ENCODE measurements at regions of chr4 and their contacts with region 1.

Region 1: GRCh38 chr4:76504613-76505465 is 69.8 kb downstream of the SHROOM3 start:
- DNase-seq: no peak
- H3K4me3 ChIP-seq: no peak overlapping the region
- H3K27ac ChIP-seq: no peak overlapping the region
- H3K4me1 ChIP-seq: no peaks in the 10 kb centered on the region
- H3K27me3 ChIP-seq: peaks cover 15% of the 10 kb centered on the region
- CTCF ChIP-seq: peak; percentile 76

Region 2: GRCh38 chr4:76179398-76180318 is 325.2 kb before region 1 on chr4:
- intact Hi-C with region 1: loop called (anchors 10 kb)
- DNase-seq: peak; percentile 82
- H3K4me3 ChIP-seq: no peak overlapping the region
- H3K27ac ChIP-seq: no peak overlapping the region
- H3K4me1 ChIP-seq: peaks cover 50% of the 10 kb centered on the region
- H3K27me3 ChIP-seq: no peaks in the 10 kb centered on the region
- CTCF ChIP-seq: peak; percentile 92

Region 3: DNA sequence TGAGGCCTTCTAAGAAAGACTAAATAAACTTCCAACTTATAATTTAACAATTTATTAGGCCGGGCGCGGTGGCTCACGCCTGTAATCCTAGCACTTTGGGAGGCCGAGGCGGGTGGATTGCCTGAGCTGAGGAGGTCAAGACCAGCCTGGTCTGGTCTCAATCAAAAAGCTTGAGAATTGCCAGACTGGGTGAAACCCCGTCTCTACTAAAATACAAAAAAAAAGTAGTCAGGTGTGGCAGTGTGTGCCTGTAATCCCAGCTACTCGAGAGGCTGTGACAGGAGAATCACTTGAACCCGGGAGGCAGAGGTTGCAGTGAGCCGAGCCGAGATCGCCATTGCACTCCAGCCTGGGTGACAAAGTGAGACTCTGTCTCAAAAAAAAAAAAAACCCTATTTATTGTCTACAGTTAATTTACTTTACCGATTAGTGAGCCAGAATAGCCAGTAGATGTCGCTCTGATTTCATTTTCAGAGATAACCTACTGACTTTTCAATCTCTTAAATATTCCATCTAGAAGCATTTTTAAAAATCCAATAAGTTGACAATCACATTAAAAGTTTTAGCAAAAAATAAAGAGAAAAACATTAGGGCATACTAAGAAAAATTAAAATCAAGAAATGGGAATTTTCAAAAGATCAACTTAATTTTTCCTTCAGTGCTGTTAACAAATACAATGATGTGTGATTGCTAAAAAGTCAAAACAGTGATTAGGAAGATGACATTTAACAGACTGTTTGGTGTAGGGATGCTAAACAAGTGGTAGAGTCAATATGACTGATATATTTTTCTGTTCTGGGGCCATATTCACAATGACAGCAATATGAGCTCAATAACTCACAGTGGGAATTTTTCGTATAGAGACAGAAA is 74.1 kb before region 1 on chr4:
- intact Hi-C with region 1: loop called (anchors 5 kb)
- DNase-seq: no peak
- H3K4me3 ChIP-seq: no peak overlapping the region
- H3K27ac ChIP-seq: no peak overlapping the region
- H3K4me1 ChIP-seq: peaks cover 12% of the 10 kb centered on the region
- H3K27me3 ChIP-seq: peaks cover 17% of the 10 kb centered on the region
- CTCF ChIP-seq: peak; percentile 72

Region 4: DNA sequence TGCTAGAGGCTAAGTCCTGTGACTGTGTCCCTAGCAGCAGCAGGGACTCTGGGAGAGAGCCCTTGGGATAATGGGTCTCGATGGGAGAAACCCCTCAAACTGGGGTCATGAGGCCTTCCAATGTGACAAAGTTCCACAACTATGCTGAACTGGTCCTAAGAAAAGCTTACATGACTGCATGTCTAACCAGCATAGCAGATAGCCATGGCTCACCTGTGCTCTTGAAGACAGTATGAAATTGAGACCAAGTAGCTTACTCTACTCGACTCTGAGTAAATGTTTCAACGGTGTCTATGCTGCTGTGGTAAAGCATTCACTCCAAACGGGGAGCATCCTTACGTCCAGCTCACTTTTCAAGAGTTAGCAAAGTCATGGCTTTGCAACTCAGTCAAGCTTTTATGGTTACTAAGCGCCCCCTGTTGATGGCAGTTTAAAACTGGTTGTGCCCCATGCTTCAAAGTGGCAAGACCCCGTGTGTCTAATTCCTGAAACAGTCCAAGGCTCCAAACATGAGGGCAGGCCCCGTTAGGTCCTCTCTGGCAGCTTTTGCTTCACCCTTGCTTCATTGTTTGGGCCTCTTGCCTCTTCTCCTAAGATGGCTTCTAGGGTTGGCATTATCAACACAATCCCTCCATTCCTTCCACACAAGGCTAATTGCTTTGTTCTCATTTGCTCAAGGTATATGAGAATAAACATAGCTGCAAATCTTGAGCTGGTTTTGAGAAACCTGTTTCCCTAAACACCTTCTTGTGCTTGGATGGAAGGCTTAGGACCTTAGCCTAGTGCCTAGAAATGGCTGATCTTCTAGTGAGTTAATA is 698.8 kb after region 1 on chr4:
- intact Hi-C with region 1: loop called (anchors 10 kb)
- DNase-seq: peak; percentile 23
- H3K4me3 ChIP-seq: no peak overlapping the region
- H3K27ac ChIP-seq: no peak overlapping the region
- H3K4me1 ChIP-seq: no peaks in the 10 kb centered on the region
- H3K27me3 ChIP-seq: peaks cover 16% of the 10 kb centered on the region
- CTCF ChIP-seq: peak; percentile 82

Measured in left ventricle myocardium inferior (tissue), 1 donor.